Activated B cell treated with CpG ODN at 0.5 μM for 24 hours (primary cell): ENCODE measurements at regions of chr10 and their contacts with region 1.

Region 1: DNA sequence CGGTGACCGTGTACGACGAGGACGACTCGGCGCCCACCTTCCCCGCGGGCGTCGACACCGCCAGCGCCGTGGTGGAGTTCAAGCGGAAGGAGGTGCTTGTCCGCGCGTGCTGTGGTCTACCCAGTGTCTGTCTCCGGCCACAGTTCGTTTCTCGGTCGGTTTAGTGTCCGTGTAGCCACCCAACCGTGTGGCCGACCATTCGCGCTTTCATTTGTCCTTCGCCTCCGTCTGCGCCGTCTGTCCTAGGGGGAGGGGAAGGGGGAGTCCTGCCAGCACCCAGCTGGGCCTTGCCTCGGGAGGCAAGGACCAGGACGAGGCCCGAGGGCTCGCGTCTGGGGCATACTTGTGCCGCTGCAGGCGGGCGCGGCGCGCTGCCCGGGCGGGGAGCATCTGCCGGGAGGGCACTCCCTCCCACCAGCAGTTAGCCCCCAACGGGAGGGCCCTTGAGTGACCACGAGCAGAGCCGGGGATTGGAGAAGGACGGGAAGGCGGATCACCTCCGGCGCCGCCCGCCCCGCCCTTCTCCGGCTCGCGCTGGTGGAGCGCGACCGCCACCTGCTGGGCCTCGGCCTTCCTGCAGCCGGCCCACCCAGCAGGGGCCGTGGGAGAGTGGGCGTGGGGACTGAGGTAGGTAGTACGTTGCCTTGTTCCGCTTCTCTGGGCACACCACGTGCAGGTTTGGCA is 28.4 kb downstream of the RET start:
- DNase-seq: peak; percentile 82
- ATAC-seq: peak; percentile 95
- H3K4me3 Mint-ChIP-seq: peak overlapping the region; percentile 83
- H3K27ac Mint-ChIP-seq: no peak overlapping the region
- H3K4me1 Mint-ChIP-seq: peaks cover 16% of the 10 kb centered on the region
- H3K27me3 Mint-ChIP-seq: peaks cover 22% of the 10 kb centered on the region
- CTCF ChIP-seq: peak; percentile 97

Region 2: GRCh38 chr10:42753126-42753506 is 352.1 kb before region 1 on chr10:
- CTCF ChIA-PET with region 1: interaction called, 3 read pairs
- POLR2A ChIA-PET with region 1: no interaction called
- intact Hi-C with region 1: loop called (anchors 1 kb)
- DNase-seq: peak; percentile 46
- ATAC-seq: peak; percentile 45
- H3K4me3 Mint-ChIP-seq: peak overlapping the region; percentile 83
- H3K27ac Mint-ChIP-seq: no peak overlapping the region
- H3K4me1 Mint-ChIP-seq: peaks cover 14% of the 10 kb centered on the region
- H3K27me3 Mint-ChIP-seq: peaks cover 56% of the 10 kb centered on the region
- CTCF ChIP-seq: no peak

Region 3: GRCh38 chr10:42866115-42866995 is 238.9 kb before region 1 on chr10:
- CTCF ChIA-PET with region 1: no interaction called
- POLR2A ChIA-PET with region 1: no interaction called
- intact Hi-C with region 1: loop called (anchors 1 kb)
- DNase-seq: peak; percentile 36
- ATAC-seq: peak; percentile 45
- H3K4me3 Mint-ChIP-seq: no peak overlapping the region
- H3K27ac Mint-ChIP-seq: no peak overlapping the region
- H3K4me1 Mint-ChIP-seq: peaks cover 2% of the 10 kb centered on the region
- H3K27me3 Mint-ChIP-seq: peaks cover 24% of the 10 kb centered on the region
- CTCF ChIP-seq: no peak

Region 4: DNA sequence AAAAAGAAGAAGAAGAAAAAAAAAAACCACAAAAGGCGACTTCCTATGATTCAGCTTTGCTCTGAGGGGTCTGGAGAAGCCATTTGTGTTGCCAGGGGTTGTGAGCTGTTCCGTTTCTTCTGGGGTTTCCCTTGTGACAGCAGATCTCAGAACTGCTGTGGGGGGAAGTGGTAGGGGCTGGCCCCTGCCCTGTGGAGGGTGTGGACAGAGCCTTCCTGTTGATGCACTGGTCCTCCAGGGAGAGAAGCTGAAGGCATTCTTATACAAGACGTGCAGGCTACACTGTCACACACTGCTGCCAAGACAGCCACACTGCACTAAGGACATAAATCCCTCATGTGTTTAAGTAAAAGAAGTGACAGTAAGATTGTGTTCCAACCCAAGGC is 15.7 kb after region 1 on chr10:
- CTCF ChIA-PET with region 1: no interaction called
- POLR2A ChIA-PET with region 1: interaction called, 5 read pairs
- intact Hi-C with region 1: loop called (anchors 1 kb)
- DNase-seq: no peak
- ATAC-seq: peak; percentile 98
- H3K4me3 Mint-ChIP-seq: peak overlapping the region; percentile 59
- H3K27ac Mint-ChIP-seq: peak overlapping the region; percentile 88
- H3K4me1 Mint-ChIP-seq: peaks cover 46% of the 10 kb centered on the region
- H3K27me3 Mint-ChIP-seq: no peaks in the 10 kb centered on the region
- CTCF ChIP-seq: no peak